K562 (cell line): ENCODE measurements at regions of chr2 and their contacts with region 1.

Region 1: GRCh38 chr2:157194097-157194688 is 63.3 kb upstream of the GALNT5 start:
- DNase-seq: peak; percentile 39 to 84 (median 51)
- ATAC-seq: peak; percentile 88
- H3K4me3 ChIP-seq: no peak overlapping the region
- H3K27ac ChIP-seq: no peak overlapping the region
- H3K4me1 ChIP-seq: peaks cover 0 to 10% of the 10 kb centered on the region in 2 experiments; a peak in 2 of 5 replicates
- H3K27me3 ChIP-seq: no peaks in the 10 kb centered on the region
- CTCF ChIP-seq: peak; percentile 58 to 93 (median 74)
- EP300 ChIP-seq: 0 out of 2 replicates have a peak, but pooled peaks have one; percentile 11
- POLR2A ChIP-seq: no peak
- RAD21 ChIP-seq: peak; percentile 96 to 97

Region 2: DNA sequence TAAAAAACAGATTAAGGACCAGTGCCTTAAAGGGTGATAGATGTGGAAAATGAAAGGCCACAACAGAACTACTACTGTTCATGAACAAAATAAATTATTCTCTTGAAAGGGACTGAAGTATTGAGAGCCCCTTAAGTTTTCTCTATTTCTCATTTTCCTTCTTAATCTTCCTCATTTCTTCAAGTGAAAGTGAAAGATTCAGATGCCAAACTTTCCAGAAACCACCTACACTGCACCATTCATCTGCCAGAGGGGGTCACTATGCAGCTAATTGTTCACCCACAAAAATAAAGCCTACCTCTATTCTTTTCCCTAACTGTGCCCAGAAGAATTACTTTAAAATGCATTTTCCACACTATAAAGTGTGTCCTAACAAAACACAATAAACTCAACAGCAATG is 1001.7 kb before region 1 on chr2:
- CTCF ChIA-PET with region 1: no interaction called
- POLR2A ChIA-PET with region 1: no interaction called
- in situ Hi-C with region 1: no loop called
- intact Hi-C with region 1: loop called (anchors 5 kb)
- DNase-seq: no peak
- ATAC-seq: peak; percentile 64; the same call in 2 of the 3 replicates
- H3K4me3 ChIP-seq: no peak overlapping the region
- H3K27ac ChIP-seq: no peak overlapping the region
- H3K4me1 ChIP-seq: no peaks in the 10 kb centered on the region
- H3K27me3 ChIP-seq: no peaks in the 10 kb centered on the region
- CTCF ChIP-seq: peak in 2 of 3 experiments; percentile 4 to 52; a peak in 2 of 6 replicates
- EP300 ChIP-seq: no peak
- POLR2A ChIP-seq: no peak
- RAD21 ChIP-seq: peak; percentile 31 to 55; a peak in 3 of 4 replicates

Region 3: DNA sequence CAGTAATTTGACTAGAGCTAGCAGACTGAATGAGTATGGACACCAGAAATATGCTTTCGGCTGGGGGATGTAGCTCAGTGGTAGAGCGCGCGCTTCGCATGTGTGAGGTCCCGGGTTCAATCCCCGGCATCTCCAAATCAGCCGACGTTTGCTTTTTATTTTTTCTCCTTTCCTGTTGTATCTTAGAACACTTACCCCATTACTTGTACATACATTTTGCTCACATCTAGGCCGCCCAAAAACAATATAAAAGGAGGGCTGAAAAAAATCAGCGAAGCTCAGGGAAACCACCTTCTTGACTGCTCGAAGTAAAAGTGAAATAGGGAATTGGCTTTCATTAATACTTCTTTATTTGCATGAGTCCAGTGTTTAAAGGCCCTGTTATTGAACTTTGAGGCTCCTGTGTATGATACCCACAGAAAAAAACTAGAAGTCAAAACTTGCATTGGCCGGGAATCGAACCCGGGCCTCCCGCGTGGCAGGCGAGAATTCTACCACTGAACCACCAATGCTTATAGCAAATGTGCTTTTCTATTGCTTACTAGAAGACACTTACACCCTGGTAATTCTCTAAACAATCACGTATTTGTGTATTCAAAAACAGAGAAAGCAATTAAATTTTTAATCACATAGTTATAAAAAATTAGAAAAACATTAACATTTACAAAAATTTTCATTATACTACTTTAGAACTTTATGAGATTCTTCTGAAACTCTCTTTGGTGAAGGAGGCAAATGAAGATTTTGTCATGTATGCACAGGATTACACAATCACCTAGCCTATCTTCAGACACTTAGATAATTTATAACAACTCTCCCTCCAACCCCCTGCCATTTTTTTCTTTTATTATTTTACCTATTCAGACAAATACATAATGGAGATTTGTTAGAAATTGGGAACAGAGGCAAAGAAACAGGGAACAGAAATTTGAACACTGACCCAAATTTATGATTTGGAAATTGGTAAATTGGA is 793.2 kb before region 1 on chr2:
- CTCF ChIA-PET with region 1: no interaction called
- POLR2A ChIA-PET with region 1: no interaction called
- in situ Hi-C with region 1: no loop called
- intact Hi-C with region 1: loop called (anchors 10 kb)
- DNase-seq: peak; percentile 73 to 84 (median 74)
- ATAC-seq: peak; percentile 84
- H3K4me3 ChIP-seq: peak overlapping the region; percentile 63
- H3K27ac ChIP-seq: peak overlapping the region; percentile 77
- H3K4me1 ChIP-seq: peaks cover 8 to 18% of the 10 kb centered on the region in 2 experiments; a peak in 4 of 5 replicates
- H3K27me3 ChIP-seq: no peaks in the 10 kb centered on the region
- CTCF ChIP-seq: peak in 1 of 3 experiments; percentile 15; a peak in 1 of 6 replicates
- EP300 ChIP-seq: peak; percentile 60; the same call in 1 of the 2 replicates
- POLR2A ChIP-seq: no peak
- RAD21 ChIP-seq: peak; percentile 32 to 42

Region 4: DNA sequence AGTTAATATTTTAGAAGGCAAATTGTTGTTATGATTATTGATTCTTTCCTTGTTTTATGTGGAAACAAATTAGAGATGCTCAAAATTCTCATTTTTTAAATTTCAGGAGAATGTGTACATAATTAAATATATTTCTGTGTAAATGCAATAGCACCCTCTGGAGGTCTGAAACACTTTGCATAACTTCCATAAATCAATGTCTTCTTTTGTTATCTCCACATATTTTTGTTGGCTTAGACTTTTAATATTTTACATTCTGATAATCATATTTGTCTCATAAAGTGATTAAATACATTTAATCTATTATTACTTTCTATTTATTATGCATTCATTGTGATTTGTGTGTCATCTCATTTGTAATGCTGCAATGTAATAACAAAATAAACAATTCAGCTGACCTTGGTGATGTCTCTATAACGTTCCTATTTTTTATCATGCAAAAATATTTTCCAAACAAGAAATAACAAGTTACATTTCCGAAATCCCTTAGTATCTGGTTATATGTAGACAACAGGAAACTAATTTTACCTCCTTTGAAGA is 138.5 kb before region 1 on chr2:
- CTCF ChIA-PET with region 1: no interaction called
- POLR2A ChIA-PET with region 1: no interaction called
- in situ Hi-C with region 1: no loop called
- intact Hi-C with region 1: loop called (anchors 2 kb)
- DNase-seq: peak in 2 of 4 experiments; percentile 9 to 29
- ATAC-seq: 0 out of 3 replicates have a peak, but pooled peaks have one; percentile 57
- H3K4me3 ChIP-seq: no peak overlapping the region
- H3K27ac ChIP-seq: no peak overlapping the region
- H3K4me1 ChIP-seq: no peaks in the 10 kb centered on the region
- H3K27me3 ChIP-seq: no peaks in the 10 kb centered on the region
- CTCF ChIP-seq: peak in 2 of 3 experiments; percentile 14 to 64; a peak in 3 of 6 replicates
- EP300 ChIP-seq: no peak
- POLR2A ChIP-seq: no peak
- RAD21 ChIP-seq: peak; percentile 45 to 72